WTC11 (cell line): ENCODE measurements at regions of chr14 and their contacts with region 1.

Region 1: DNA sequence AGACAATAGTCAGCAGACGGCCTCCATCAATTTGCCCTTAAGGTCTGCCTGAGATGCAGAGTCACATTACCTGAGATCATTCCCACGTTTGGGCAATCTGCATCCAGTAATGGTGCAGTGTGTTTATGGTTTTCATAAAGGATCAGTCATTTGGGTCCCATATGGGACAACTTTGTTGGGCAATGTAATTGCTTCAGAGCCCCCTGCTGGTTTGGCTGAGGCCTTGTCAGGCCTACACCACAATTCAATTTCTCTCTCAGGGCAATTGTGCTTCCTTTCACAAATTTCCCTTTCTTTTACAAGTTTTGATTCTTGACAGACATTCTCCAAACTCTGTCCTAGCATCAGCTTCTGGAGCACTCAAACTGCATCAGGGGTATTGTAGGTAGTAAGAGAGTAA is 191.2 kb upstream of the SSTR1 start:
- DNase-seq: no peak
- ATAC-seq: peak; percentile 55
- H3K4me3 Mint-ChIP-seq: no peak overlapping the region
- H3K27ac Mint-ChIP-seq: no peak overlapping the region
- H3K4me1 Mint-ChIP-seq: no peaks in the 10 kb centered on the region
- H3K27me3 Mint-ChIP-seq: peaks cover 8% of the 10 kb centered on the region
- CTCF ChIP-seq: 0 out of 2 replicates have a peak, but pooled peaks have one; percentile 23

Region 2: GRCh38 chr14:37890095-37890494 is 126.4 kb before region 1 on chr14:
- CTCF ChIA-PET with region 1: no interaction called
- POLR2A ChIA-PET with region 1: no interaction called
- DNase-seq: no peak
- ATAC-seq: no peak
- H3K4me3 Mint-ChIP-seq: no peak overlapping the region
- H3K27ac Mint-ChIP-seq: no peak overlapping the region
- H3K4me1 Mint-ChIP-seq: peaks cover 24% of the 10 kb centered on the region
- H3K27me3 Mint-ChIP-seq: peaks cover 47% of the 10 kb centered on the region
- CTCF ChIP-seq: no peak

Region 3: GRCh38 chr14:38003746-38004609 is 12.5 kb before region 1 on chr14:
- CTCF ChIA-PET with region 1: interaction called, 13 read pairs
- POLR2A ChIA-PET with region 1: no interaction called
- DNase-seq: no peak
- ATAC-seq: peak; percentile 64
- H3K4me3 Mint-ChIP-seq: no peak overlapping the region
- H3K27ac Mint-ChIP-seq: peak overlapping the region; percentile 31; the same call in 1 of the 2 replicates
- H3K4me1 Mint-ChIP-seq: peaks cover 54% of the 10 kb centered on the region
- H3K27me3 Mint-ChIP-seq: peaks cover 3% of the 10 kb centered on the region
- CTCF ChIP-seq: no peak